Gastrocnemius medialis (tissue), 4 donors: ENCODE measurements at regions of chr1 and their contacts with region 1.

Region 1: DNA sequence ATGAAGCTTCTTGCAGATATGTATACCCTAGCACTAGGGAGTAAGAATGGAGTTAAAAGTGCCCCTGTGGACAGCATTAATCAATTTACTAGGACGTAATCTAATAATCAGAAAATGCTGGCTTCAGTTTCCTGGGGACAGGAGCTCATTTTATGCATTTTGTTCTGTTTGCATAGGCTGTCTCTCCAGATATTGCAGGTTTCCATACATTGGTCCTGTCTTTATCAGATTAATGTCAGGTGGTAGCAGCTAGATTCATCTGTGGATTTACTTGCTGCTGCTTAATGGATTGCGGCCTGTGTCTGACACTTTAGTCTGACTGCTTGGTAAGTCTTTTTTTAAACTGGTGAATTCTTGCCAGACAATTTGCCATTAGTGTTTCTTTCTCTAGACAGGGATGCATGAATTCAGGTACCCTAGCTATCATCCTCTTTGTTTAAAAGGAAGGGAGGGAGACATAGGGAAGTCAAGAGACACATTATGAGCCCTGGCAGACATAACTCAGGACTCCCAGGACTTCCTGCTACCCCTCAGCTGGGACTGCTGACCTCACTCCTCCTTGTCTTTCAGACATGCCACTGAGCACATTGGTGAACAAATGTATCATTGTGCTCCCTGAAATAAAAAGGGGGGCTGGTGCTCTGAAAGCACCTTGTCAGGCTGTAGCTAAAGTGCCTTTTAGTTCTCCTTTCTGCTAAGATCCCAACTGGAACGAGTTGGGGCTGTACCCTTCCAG is 47.7 kb downstream of the NOS1AP start:
- DNase-seq: no peak
- ATAC-seq: no peak
- H3K4me3 ChIP-seq: no peak overlapping the region
- H3K27ac ChIP-seq: no peak overlapping the region
- H3K4me1 ChIP-seq: no peaks in the 10 kb centered on the region
- H3K27me3 ChIP-seq: no peaks in the 10 kb centered on the region
- CTCF ChIP-seq: no peak
- POLR2A ChIP-seq: no peak

Region 2: DNA sequence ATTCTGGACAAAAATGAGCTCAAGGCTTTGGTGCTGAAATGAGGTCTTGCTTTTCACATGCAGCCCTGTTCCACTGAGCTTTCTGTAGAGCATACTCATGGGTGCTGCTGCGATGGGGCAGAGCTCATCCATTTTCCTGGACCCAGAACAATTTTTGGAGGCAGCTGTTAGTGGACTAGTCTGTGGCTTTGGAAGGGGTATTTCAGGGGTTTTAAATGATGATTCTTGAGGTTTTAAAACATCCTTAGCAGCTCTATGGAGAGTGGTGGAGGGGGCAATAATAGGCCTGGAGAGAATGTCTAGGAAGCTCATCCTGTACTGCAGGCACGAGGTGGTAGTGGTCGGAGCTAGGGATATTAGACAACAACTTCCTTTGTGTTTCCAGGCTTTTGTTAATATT is 31.2 kb before region 1 on chr1:
- in situ Hi-C with region 1: no loop called
- intact Hi-C with region 1: loop called (anchors 1 kb)
- DNase-seq: no peak
- ATAC-seq: no peak
- H3K4me3 ChIP-seq: no peak overlapping the region
- H3K27ac ChIP-seq: no peak overlapping the region
- H3K4me1 ChIP-seq: no peaks in the 10 kb centered on the region
- H3K27me3 ChIP-seq: no peaks in the 10 kb centered on the region
- CTCF ChIP-seq: no peak
- POLR2A ChIP-seq: no peak

Region 3: GRCh38 chr1:162710345-162710744 is 593.1 kb after region 1 on chr1:
- in situ Hi-C with region 1: no loop called
- intact Hi-C with region 1: no loop called
- DNase-seq: no peak
- ATAC-seq: peak in 1 of 2 donors; percentile 9
- H3K4me3 ChIP-seq: no peak overlapping the region
- H3K27ac ChIP-seq: peak overlapping the region; percentile 21 to 61 (median 56)
- H3K4me1 ChIP-seq: peaks cover 14 to 15% of the 10 kb centered on the region in 2 donors
- H3K27me3 ChIP-seq: no peaks in the 10 kb centered on the region
- CTCF ChIP-seq: no peak
- POLR2A ChIP-seq: no peak